Mammary epithelial cell (primary cell): ENCODE measurements at regions of chr22 and their contacts with region 1.

Region 1: GRCh38 chr22:32991353-32992121 is 66.6 kb downstream of the SYN3 start:
- DNase-seq: peak; percentile 89
- H3K4me3 ChIP-seq: no peak overlapping the region
- H3K27ac ChIP-seq: peak overlapping the region; percentile 65
- H3K4me1 ChIP-seq: peaks cover 49% of the 10 kb centered on the region
- H3K27me3 ChIP-seq: no peaks in the 10 kb centered on the region
- CTCF ChIP-seq: no peak

Region 2: GRCh38 chr22:32810561-32811004 is 181.0 kb before region 1 on chr22:
- CTCF ChIA-PET with region 1: interaction called, 3 read pairs
- dilution Hi-C with region 1: no loop called
- in situ Hi-C with region 1: loop called (anchors 5 to 10 kb)
- intact Hi-C with region 1: no loop called
- DNase-seq: peak; percentile 51
- H3K4me3 ChIP-seq: no peak overlapping the region
- H3K27ac ChIP-seq: no peak overlapping the region
- H3K4me1 ChIP-seq: peaks cover 4% of the 10 kb centered on the region
- H3K27me3 ChIP-seq: no peaks in the 10 kb centered on the region
- CTCF ChIP-seq: no peak